Activated CD4-positive, alpha-beta memory T cell treated with anti-CD3 and anti-CD28 coated beads, Interleukin-2, amount 10 ng/mL, durations not matched to agents 7 days and 5 days (primary cell): ENCODE measurements at regions of chr3 and their contacts with region 1.

Region 1: GRCh38 chr3:11306817-11307589 is 34.8 kb downstream of the ATG7 start:
- DNase-seq: peak; percentile 50
- H3K4me3 Mint-ChIP-seq: peak overlapping the region; percentile 6
- H3K27ac Mint-ChIP-seq: peak overlapping the region; percentile 72
- H3K4me1 Mint-ChIP-seq: peaks cover 36% of the 10 kb centered on the region
- H3K27me3 Mint-ChIP-seq: no peaks in the 10 kb centered on the region

Region 2: DNA sequence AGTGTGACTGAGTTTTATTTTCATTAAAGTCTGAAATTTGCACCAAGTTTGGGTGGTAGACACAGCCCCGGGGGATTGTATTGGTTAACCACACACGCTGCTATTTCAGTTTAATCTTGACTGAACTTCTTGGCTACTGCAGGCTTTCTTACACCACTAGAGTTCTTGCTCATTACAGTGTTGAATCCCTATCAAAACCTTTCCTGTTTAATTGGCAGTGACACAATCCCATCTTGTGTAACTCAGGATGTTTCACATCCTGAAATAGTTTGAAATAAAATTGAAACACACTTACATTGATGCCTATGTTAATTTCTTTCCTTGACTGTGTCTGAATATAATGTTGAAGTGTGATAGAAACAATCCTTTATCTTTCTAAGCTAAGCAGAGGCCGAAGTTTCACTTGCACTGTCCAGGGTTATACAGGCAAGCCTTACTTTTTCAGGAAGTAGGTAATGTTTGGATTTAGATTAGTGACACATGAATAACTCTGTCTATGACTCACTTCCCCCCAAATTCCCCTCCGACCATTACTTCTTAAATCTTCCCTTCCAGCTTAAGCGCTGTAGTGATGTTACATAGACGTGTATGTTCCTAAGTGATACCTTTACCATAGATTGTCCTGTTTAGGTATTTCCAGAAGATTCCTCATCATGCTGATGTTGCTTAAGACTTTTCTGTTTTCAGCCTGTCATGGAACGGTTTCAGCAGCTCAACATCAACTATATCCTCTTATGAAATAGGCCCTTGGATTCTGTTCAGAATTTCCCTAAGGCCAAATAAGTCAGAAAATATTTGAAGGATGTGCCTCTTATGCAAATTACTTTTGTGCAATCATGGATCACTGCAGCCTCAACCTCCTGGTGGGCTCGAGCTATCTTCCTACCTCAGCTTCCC is 18.0 kb before region 1 on chr3:
- CTCF ChIA-PET with region 1: interaction called, 5 read pairs
- POLR2A ChIA-PET with region 1: interaction called, 15 read pairs
- DNase-seq: no peak
- H3K4me3 Mint-ChIP-seq: no peak overlapping the region
- H3K27ac Mint-ChIP-seq: peak overlapping the region; percentile 73
- H3K4me1 Mint-ChIP-seq: peaks cover 55% of the 10 kb centered on the region
- H3K27me3 Mint-ChIP-seq: no peaks in the 10 kb centered on the region